ENCODE measurements at regions of chr16 and their contacts with region 1.

Region 1: GRCh38 chr16:66588981-66589713 is 9.9 kb downstream of the CMTM2 start:
- DNase-seq: peak; percentile 45
- H3K4me3 ChIP-seq: no peak overlapping the region
- H3K27ac ChIP-seq: no peak overlapping the region
- H3K4me1 ChIP-seq: peaks cover 7% of the 10 kb centered on the region
- H3K27me3 ChIP-seq: no peaks in the 10 kb centered on the region
- CTCF ChIP-seq: peak; percentile 62 to 76
- POLR2A ChIP-seq: no peak

Region 2: DNA sequence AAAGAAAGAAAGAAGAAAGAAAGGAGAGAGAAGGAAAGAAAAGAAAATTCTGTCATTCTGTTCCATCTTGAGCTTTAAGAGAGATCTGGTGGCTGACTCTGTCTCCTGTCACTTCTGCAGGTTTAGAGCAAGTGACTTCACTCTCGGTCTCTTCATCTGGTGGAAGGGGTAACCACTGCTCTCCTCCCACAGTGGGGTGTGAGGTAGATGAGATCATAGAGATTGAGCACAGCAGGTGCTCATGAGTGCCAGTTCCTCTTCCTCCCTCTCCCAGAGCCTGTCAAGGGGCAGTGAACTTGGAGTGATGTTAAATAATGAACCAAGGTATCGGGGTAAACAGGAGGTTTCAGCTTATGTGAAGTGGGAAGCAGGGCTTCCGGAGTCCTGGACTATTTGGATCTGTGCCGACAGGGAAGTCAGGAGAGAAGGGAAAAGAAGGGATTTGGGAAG is 114.4 kb before region 1 on chr16:
- CTCF ChIA-PET with region 1: interaction called, 15 read pairs
- POLR2A ChIA-PET with region 1: no interaction called
- dilution Hi-C with region 1: no loop called
- intact Hi-C with region 1: loop called (anchors 1 kb)
- DNase-seq: peak; percentile 31
- H3K4me3 ChIP-seq: no peak overlapping the region
- H3K27ac ChIP-seq: no peak overlapping the region
- H3K4me1 ChIP-seq: peaks cover 5% of the 10 kb centered on the region
- H3K27me3 ChIP-seq: peaks cover 0 to 8% of the 10 kb centered on the region in 2 experiments
- CTCF ChIP-seq: no peak
- POLR2A ChIP-seq: no peak

Region 3: GRCh38 chr16:66552286-66553177 is 36.6 kb before region 1 on chr16 and contains the start of gene CKLF:
- CTCF ChIA-PET with region 1: interaction called, 4 read pairs
- POLR2A ChIA-PET with region 1: no interaction called
- dilution Hi-C with region 1: no loop called
- intact Hi-C with region 1: loop called (anchors 2 kb)
- DNase-seq: peak; percentile 96
- H3K4me3 ChIP-seq: peak within 1 kb of the TSS; percentile 13 to 65 (median 57)
- H3K27ac ChIP-seq: peak within 1 kb of the TSS; percentile 65
- H3K4me1 ChIP-seq: peaks cover 32% of the 10 kb centered on the region
- H3K27me3 ChIP-seq: no peaks in the 10 kb centered on the region
- CTCF ChIP-seq: no peak
- POLR2A ChIP-seq: peak; percentile 83
- total RNA-seq, gene CKLF: 80.0 and 93.4 TPM in 2 replicates

Region 4: DNA sequence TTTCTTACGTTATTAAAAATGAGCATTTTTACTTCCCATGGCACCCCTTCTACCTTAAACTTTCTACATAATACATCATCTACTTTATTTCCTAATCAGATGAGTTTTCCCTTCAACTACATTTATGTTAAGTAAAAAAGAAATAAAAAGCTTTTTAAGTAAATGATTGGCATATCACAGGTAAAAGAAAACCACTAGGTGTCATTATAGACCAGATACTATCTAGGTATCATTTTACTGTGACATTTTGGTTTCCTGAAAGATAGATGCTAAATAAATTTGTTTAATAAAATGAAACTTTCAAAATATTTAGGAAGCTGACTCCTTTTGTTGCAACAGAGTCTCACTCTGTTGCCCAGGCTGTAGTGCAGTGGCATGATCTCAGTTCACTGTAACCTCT is 26.7 kb before region 1 on chr16:
- CTCF ChIA-PET with region 1: interaction called, 13 read pairs
- POLR2A ChIA-PET with region 1: no interaction called
- dilution Hi-C with region 1: no loop called
- intact Hi-C with region 1: no loop called
- DNase-seq: no peak
- H3K4me3 ChIP-seq: no peak overlapping the region
- H3K27ac ChIP-seq: no peak overlapping the region
- H3K4me1 ChIP-seq: peaks cover 19% of the 10 kb centered on the region
- H3K27me3 ChIP-seq: no peaks in the 10 kb centered on the region
- CTCF ChIP-seq: no peak
- POLR2A ChIP-seq: no peak

Region 5: DNA sequence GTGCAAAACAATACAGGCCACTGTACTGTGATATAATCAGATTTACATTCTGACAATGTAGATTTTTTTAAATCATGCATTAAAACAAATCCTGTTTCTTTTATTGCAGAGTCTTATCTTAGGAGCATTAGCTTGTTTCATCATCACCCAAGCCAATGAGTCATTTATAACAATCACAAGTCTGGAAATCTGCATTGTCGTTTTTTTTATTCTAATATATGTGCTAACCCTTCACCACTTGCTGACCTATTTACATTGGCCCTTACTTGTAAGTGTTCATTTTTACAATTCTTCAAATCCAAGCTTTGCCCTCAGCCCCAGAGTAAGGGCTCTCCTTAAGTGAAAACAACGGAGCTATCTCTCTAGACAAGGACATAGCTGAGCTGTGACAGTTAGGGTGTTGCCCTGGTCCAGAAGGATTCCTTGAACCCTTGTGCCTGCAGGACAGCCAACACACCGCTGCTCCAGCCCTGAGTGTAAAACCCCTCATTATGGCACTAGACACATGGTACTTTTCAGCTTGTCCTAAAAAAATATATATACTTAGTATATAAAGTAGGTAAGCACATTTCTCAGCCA is 19.2 kb before region 1 on chr16:
- CTCF ChIA-PET with region 1: interaction called, 14 read pairs
- POLR2A ChIA-PET with region 1: no interaction called
- dilution Hi-C with region 1: no loop called
- intact Hi-C with region 1: no loop called
- DNase-seq: peak; percentile 76
- H3K4me3 ChIP-seq: no peak overlapping the region
- H3K27ac ChIP-seq: peak overlapping the region; percentile 79
- H3K4me1 ChIP-seq: peaks cover 34% of the 10 kb centered on the region
- H3K27me3 ChIP-seq: no peaks in the 10 kb centered on the region
- CTCF ChIP-seq: no peak
- POLR2A ChIP-seq: no peak

Region 6: DNA sequence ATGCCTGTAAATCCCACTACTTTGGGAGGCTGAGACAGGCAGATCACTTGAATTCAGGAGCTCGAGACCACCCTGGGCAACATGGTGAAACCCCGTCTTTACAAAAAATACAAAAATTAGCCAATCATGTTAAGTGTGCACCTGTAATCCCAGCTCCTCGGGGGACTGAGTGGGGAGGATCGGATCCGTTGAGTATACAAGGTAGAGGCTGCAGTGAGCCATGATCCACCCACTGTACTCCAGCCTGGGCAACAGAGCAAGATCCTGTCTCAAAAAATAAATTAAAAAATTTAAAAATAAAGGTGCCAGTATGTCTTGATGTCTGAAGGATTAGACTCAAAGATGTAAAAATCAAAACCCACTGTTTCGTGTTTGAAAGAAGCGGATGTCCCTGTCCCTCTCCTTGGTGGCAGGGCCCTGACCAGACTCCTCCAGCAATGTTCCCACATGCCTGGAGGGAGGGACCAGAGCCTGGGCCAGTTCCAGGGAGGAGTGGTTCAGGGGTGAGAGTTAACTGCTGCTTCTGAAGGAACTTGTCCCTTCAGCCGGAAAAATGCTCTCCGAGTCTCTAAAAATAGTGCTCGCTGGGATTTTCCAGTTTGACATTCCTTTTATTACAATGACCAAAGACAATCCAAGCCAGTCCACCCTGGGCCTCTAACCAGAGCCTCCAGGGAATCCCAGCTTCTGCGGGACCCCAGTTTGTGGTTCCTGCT is 116.8 kb after region 1 on chr16:
- CTCF ChIA-PET with region 1: no interaction called
- POLR2A ChIA-PET with region 1: no interaction called
- dilution Hi-C with region 1: no loop called
- intact Hi-C with region 1: no loop called
- DNase-seq: peak; percentile 24
- H3K4me3 ChIP-seq: no peak overlapping the region
- H3K27ac ChIP-seq: no peak overlapping the region
- H3K4me1 ChIP-seq: no peaks in the 10 kb centered on the region
- H3K27me3 ChIP-seq: peaks cover 2 to 7% of the 10 kb centered on the region in 2 experiments
- CTCF ChIP-seq: no peak
- POLR2A ChIP-seq: no peak

Region 7: GRCh38 chr16:67137605-67138004 is 548.5 kb after region 1 on chr16:
- CTCF ChIA-PET with region 1: no interaction called
- POLR2A ChIA-PET with region 1: no interaction called
- dilution Hi-C with region 1: no loop called
- intact Hi-C with region 1: no loop called
- DNase-seq: peak; percentile 96
- H3K4me3 ChIP-seq: no peak overlapping the region
- H3K27ac ChIP-seq: no peak overlapping the region
- H3K4me1 ChIP-seq: peaks cover 9% of the 10 kb centered on the region
- H3K27me3 ChIP-seq: no peaks in the 10 kb centered on the region
- CTCF ChIP-seq: no peak
- POLR2A ChIP-seq: no peak

Measured in endothelial cell of umbilical vein (primary cell).